ENCODE measurements at regions of chr16 and their contacts with region 1.

Region 1: DNA sequence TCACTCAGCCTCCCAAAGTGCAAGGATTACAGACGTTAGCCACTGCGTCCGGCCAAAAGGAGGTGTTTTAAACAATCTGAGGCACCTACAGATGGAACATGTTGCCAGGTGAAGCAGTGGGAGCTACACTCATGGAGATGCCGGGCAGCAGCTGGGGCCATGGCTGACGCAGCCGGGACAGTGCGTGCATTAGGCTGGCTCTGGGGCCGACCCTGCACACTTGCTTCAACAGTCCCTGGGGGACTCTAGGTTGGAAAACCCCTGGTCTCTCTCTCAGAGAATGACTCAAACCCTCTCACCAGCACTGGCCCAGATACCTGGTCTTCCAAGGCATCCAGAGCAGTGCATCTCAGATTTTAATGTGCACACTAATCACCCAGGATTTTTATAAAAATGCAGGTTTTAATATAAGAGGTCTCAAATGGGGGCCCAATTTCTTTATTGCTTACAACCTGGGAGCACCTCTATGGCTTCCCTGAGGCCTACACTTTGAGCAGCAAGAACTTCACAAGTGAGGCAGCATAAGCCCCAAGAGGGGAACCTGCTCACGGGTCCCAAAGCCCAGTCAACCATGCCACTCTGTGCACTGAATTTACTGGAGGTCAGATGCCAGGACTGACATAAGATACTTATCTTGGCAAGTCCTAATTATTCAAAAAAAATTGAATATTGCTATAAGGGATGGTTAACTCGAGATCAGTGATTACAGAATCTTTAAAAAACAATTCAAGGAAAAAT is 70.8 kb upstream of the TRAP1 start:
- DNase-seq: no peak
- H3K4me3 Mint-ChIP-seq: no peak overlapping the region
- H3K27ac Mint-ChIP-seq: no peak overlapping the region
- H3K4me1 Mint-ChIP-seq: peaks cover 35% of the 10 kb centered on the region
- H3K27me3 Mint-ChIP-seq: no peaks in the 10 kb centered on the region

Region 2: GRCh38 chr16:3734758-3735221 is 53.3 kb before region 1 on chr16:
- intact Hi-C with region 1: no loop called
- DNase-seq: no peak
- H3K4me3 Mint-ChIP-seq: no peak overlapping the region
- H3K27ac Mint-ChIP-seq: no peak overlapping the region
- H3K4me1 Mint-ChIP-seq: no peaks in the 10 kb centered on the region
- H3K27me3 Mint-ChIP-seq: no peaks in the 10 kb centered on the region

Region 3: DNA sequence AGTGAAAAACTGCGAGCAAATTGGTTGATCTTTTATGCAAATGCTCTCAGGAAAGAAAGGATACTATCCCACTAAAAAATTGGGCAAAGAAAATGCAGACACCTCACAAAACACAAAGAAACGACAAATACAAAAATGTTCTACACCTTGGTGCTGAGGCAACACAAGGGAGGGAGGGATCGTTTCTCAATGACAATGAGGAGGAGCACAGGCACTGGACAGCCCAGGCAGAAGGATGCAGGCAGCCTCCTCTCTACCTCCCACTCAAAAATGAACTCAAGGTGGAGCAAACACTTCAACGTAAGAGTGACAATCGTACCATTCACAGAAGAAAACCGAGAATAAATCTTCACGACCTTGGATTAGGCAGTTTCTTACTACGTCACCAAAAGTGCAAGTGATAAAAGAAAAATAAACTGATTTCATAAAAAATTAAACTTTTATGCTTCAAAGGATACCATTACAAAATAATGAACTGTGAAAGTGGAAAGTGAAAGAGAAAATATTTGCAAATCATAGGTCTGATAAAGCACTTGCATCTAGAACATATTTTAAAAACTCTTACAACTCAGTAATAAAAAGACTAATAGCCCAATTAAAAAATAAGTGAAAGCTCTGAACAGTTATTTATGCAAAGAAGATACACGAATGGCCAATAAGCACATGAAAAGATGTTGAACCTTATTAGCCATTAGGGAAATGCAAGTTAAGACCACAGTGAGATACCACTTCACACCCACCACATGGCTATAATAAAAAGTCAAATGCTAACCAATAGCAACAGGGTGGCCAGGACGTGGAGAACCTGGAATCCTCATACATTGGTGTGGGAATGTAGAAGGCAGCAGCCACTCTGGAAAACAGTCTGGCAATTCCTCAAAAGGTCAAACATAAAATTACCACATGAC is 10.1 kb after region 1 on chr16:
- intact Hi-C with region 1: loop called (anchors 1 kb)
- DNase-seq: no peak
- H3K4me3 Mint-ChIP-seq: peak overlapping the region; percentile 33
- H3K27ac Mint-ChIP-seq: no peak overlapping the region
- H3K4me1 Mint-ChIP-seq: peaks cover 50% of the 10 kb centered on the region
- H3K27me3 Mint-ChIP-seq: peaks cover 10% of the 10 kb centered on the region

Region 4: GRCh38 chr16:3825103-3825502 is 37.0 kb after region 1 on chr16:
- intact Hi-C with region 1: loop called (anchors 2 kb)
- DNase-seq: no peak
- H3K4me3 Mint-ChIP-seq: no peak overlapping the region
- H3K27ac Mint-ChIP-seq: peak overlapping the region; percentile 40
- H3K4me1 Mint-ChIP-seq: peaks cover 57% of the 10 kb centered on the region
- H3K27me3 Mint-ChIP-seq: no peaks in the 10 kb centered on the region

Region 5: DNA sequence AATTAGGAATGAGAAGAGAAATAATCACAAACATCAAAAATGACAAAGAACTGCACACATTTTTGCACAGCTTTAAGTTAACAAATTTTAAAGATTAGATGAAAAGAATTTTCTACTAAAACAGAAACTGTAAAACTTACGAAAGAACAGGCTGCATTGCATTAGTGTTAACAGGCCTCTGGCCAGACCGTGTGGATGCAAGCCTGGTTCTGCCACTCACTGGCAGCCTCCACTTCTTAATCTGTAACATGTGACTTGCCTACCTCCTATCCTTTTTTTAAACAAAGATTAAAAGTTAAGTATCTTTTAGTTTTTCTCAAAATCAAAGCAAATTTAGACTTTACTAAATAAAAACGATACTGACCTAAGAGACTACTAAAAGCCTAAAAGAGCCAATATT is 54.9 kb after region 1 on chr16:
- intact Hi-C with region 1: no loop called
- DNase-seq: no peak
- H3K4me3 Mint-ChIP-seq: no peak overlapping the region
- H3K27ac Mint-ChIP-seq: no peak overlapping the region
- H3K4me1 Mint-ChIP-seq: peaks cover 10% of the 10 kb centered on the region
- H3K27me3 Mint-ChIP-seq: no peaks in the 10 kb centered on the region